Activated CD4-positive, alpha-beta memory T cell treated with anti-CD3 and anti-CD28 coated beads, Interleukin-2, amount 10 ng/mL, durations not matched to agents 7 days and 5 days (primary cell): ENCODE measurements at regions of chr16 and their contacts with region 1.

Region 1: GRCh38 chr16:11715246-11715947 is 27.3 kb downstream of the TXNDC11 start:
- DNase-seq: no peak
- H3K4me3 Mint-ChIP-seq: no peak overlapping the region
- H3K27ac Mint-ChIP-seq: no peak overlapping the region
- H3K4me1 Mint-ChIP-seq: peaks cover 7% of the 10 kb centered on the region
- H3K27me3 Mint-ChIP-seq: no peaks in the 10 kb centered on the region

Region 2: GRCh38 chr16:11407047-11407982 is 308.1 kb before region 1 on chr16:
- CTCF ChIA-PET with region 1: interaction called, 15 read pairs
- POLR2A ChIA-PET with region 1: no interaction called
- DNase-seq: peak; percentile 73
- H3K4me3 Mint-ChIP-seq: no peak overlapping the region
- H3K27ac Mint-ChIP-seq: no peak overlapping the region
- H3K4me1 Mint-ChIP-seq: peaks cover 2% of the 10 kb centered on the region
- H3K27me3 Mint-ChIP-seq: no peaks in the 10 kb centered on the region

Region 3: DNA sequence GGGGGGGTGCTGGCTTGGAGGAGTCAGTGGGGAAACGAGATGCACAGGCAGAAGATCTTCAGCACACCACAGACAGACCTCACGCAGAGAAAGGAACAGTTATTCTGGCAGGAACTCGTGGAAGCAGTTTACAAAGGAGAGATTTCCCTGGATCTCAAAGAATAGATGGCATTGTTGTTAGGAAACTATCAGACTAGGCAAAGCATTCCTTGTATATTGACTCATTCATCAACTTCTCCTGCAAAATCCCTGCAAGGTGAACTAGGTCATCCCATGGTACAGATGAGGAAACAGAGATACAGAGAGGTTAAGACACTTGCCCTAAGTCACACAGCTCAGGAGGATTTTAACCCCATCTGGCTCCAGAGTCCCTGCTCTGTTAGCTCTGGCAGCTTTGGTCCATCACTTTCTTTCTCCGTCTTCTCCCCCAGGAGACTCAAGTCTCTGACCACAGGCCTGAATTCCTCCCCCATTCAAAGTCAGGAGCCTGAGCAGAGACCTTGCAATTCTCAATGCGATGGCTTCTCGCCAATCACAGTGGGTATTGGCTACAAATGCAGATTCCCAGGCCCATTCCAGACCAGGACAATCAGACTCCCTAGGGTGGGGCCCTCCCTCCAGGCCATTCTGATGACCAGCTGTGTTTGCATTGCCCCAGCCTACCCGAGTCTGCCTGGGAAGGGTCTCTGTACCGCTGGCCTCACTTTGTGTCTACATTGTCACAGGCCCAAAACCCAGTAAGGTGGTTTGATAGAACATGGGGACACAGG is 185.0 kb before region 1 on chr16:
- CTCF ChIA-PET with region 1: interaction called, 35 read pairs
- POLR2A ChIA-PET with region 1: no interaction called
- DNase-seq: no peak
- H3K4me3 Mint-ChIP-seq: no peak overlapping the region
- H3K27ac Mint-ChIP-seq: no peak overlapping the region
- H3K4me1 Mint-ChIP-seq: peaks cover 5% of the 10 kb centered on the region
- H3K27me3 Mint-ChIP-seq: peaks cover 16% of the 10 kb centered on the region

Region 4: GRCh38 chr16:11586856-11587642 is 128.3 kb before region 1 on chr16 and contains the start of gene LITAF:
- CTCF ChIA-PET with region 1: no interaction called
- POLR2A ChIA-PET with region 1: no interaction called
- DNase-seq: peak; percentile 66
- H3K4me3 Mint-ChIP-seq: peak within 1 kb of the TSS; percentile 96
- H3K27ac Mint-ChIP-seq: peak within 1 kb of the TSS; percentile 89
- H3K4me1 Mint-ChIP-seq: peaks cover 38% of the 10 kb centered on the region
- H3K27me3 Mint-ChIP-seq: peaks cover 3% of the 10 kb centered on the region
- total RNA-seq, gene LITAF: 149 to 157 TPM

Region 5: DNA sequence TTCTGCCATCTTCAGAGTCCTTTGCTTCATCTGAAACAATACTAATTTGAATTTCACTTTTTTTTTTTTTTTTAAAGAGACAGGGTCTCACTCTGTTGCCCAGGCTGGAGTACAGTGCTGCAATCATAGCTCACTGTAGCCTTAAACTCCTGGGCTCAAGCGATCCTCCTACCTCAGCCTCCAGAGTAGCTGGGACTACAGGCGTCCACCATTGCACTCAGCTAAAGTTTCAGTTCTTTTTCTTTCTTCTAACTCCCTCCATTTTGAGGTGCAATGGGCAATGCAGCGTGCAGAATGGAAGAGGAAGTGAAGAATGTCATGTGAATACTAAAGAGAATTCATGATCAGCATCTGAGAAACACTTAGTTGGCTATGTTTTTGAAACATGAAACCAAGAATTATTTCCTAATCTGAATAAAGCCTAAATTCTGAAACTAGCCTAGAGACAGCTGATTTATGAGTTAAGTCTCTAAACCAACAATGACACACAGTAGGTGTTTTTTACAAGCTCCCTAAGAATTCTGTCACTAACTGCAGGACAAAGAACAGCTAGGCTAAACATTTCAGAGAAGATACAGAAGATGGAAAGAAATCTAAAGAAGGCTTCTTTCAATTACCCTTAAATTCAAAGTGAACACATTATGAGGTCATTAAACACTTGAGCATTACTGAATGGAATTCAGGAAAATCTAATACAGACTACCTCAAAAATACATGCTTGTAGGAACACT is 26.2 kb before region 1 on chr16:
- CTCF ChIA-PET with region 1: interaction called, 12 read pairs
- POLR2A ChIA-PET with region 1: interaction called, 3 read pairs
- DNase-seq: no peak
- H3K4me3 Mint-ChIP-seq: no peak overlapping the region
- H3K27ac Mint-ChIP-seq: peak overlapping the region; percentile 58
- H3K4me1 Mint-ChIP-seq: peaks cover 23% of the 10 kb centered on the region
- H3K27me3 Mint-ChIP-seq: no peaks in the 10 kb centered on the region

Region 6: DNA sequence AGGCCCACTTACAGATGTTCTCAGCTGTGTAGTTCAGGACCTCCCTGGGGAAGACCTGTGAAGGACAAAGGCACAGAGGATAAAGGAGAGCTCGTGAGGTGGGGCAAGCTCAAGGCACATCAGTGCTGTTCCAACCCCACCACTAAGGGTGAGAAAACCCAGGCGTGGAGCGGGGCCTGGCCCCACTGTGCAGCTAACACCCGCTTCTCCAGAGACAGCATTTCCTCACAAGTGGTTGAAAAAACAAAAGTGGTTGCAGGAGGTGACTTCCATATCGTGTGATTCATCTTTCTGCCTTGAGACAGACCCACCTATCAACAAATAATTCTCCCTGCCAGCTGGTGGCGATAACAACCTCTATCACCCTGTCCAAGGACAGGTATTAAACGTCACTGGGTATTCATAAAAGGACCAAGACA is 17.1 kb before region 1 on chr16:
- CTCF ChIA-PET with region 1: interaction called, 13 read pairs
- POLR2A ChIA-PET with region 1: no interaction called
- DNase-seq: peak; percentile 30
- H3K4me3 Mint-ChIP-seq: no peak overlapping the region
- H3K27ac Mint-ChIP-seq: peak overlapping the region; percentile 24
- H3K4me1 Mint-ChIP-seq: peaks cover 56% of the 10 kb centered on the region
- H3K27me3 Mint-ChIP-seq: no peaks in the 10 kb centered on the region